ENCODE measurements at regions of chr12 and their contacts with region 1.

Region 1: DNA sequence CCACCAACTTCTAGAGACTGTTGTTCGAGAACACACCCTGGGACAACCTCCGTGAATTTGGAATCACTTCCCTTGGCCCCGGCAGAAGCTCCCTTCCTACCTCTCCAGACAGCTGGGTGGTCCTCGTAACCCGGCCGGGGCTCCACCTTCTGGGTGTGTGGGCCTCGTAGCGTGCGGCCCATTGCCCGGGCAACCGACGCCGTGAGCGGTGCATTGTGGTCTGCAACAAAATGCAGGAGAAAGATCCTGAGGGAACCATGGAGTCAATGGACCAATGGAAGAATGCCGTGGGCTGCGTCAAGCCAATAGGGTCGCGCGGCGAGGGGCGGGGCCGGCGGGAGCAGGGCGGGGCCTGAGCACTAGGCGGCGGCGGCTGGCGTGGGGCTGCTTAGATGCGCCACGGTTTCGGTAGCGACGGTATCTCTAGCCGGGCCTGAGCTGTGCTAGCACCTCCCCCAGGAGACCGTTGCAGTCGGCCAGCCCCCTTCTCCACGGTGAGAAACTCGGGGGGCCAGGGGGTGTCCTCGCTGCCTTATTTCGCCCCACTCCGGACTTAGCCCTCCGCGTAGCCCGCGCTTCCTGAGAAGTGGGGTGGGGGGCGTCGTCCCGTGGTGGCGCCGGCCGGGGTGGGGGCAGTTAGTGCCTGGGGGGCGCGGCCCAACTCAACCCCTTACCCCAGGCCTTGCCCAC is at the start of gene DYNLL1:
- DNase-seq: peak; percentile 96 to 98 (median 97)
- H3K4me3 ChIP-seq: peak within 1 kb of the TSS; percentile 85 to 99 (median 93)
- H3K27ac ChIP-seq: peak within 1 kb of the TSS; percentile 80 to 92
- H3K4me1 ChIP-seq: peaks cover 9 to 27% (median 19%) of the 10 kb centered on the region in 4 experiments
- H3K27me3 ChIP-seq: no peaks in the 10 kb centered on the region

Region 2: DNA sequence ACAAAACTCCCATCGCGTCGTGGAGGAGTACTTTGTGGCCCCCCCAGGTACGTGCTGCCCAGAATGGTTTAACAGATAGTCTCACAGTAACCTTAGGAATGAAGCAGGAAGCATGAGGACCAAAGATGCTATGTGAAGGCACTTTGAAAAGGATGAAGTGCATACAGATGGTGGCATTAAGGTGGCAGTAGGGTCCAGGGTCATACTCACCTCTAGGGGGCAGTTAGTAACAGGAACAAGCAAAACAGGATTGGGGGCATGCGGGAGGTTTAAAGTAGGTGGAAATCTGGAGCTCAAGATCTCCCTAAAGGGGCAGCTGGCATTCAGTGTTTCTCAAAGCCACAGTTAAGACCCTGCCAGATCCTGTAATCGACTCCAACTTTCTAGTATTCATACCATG is 38.7 kb before region 1 on chr12:
- CTCF ChIA-PET with region 1: interaction called, 11 read pairs
- POLR2A ChIA-PET with region 1: no interaction called
- DNase-seq: peak; percentile 46 to 74 (median 71)
- H3K4me3 ChIP-seq: no peak overlapping the region
- H3K27ac ChIP-seq: no peak overlapping the region
- H3K4me1 ChIP-seq: no peaks in the 10 kb centered on the region
- H3K27me3 ChIP-seq: no peaks in the 10 kb centered on the region

Measured in common myeloid progenitor, CD34-positive (primary cell).